Gastrocnemius medialis (tissue), 4 donors: ENCODE measurements at regions of chr1 and their contacts with region 1.

Region 1: DNA sequence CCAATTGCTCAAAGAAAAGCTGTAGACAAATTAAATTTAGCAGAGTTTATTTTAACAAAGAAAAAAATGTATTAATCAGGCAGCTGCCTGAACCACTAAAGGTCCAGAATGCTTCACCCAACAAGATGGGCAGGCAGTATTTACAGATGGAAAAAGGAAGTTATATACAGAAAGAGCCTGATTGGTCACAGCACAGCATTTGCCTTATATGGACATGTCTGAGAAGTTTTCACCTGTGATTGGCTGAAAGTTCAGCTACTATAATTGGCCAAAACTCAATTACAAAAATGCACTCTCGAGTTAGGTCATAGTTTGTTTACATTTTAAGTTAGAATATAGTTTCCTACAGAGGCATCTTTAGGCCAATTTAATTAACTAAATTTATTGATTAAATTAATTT is 15.1 kb upstream of the FMO1 start:
- DNase-seq: no peak
- ATAC-seq: no peak
- H3K4me3 ChIP-seq: no peak overlapping the region
- H3K27ac ChIP-seq: no peak overlapping the region
- H3K4me1 ChIP-seq: no peaks in the 10 kb centered on the region
- H3K27me3 ChIP-seq: no peaks in the 10 kb centered on the region
- CTCF ChIP-seq: no peak
- POLR2A ChIP-seq: no peak

Region 2: GRCh38 chr1:171081314-171081753 is 151.9 kb before region 1 on chr1:
- in situ Hi-C with region 1: loop called in 3 of 4 experiments (anchors 10 to 25 kb)
- intact Hi-C with region 1: no loop called
- DNase-seq: no peak
- ATAC-seq: peak in 1 of 2 donors; percentile 24
- H3K4me3 ChIP-seq: no peak overlapping the region
- H3K27ac ChIP-seq: peak overlapping the region; percentile 13 to 52 (median 49)
- H3K4me1 ChIP-seq: peaks cover 0 to 4% of the 10 kb centered on the region in 2 donors
- H3K27me3 ChIP-seq: no peaks in the 10 kb centered on the region
- CTCF ChIP-seq: peak in 3 of 5 experiments; percentile 22 to 43 (median 29)
- POLR2A ChIP-seq: no peak

Region 3: DNA sequence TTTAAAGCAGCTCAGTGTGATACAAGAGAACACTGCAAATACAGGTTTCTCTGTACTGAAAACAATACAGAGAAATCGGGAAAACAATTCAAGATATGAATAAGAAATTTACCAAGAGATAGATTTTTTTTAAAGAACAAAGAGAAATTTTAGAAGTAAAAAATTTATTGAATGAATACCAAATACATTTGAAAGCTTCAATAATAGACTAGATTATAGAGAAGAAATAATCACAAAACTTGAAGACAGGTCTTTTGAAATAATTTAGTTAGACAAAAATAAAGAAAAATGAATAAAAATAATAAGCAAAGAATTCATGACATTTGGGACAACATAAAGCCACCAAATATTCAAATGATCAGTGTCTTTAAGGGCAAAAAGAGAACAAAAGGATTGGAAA is 67.2 kb after region 1 on chr1:
- in situ Hi-C with region 1: no loop called
- intact Hi-C with region 1: loop called (anchors 5 kb)
- DNase-seq: no peak
- ATAC-seq: no peak
- H3K4me3 ChIP-seq: no peak overlapping the region
- H3K27ac ChIP-seq: no peak overlapping the region
- H3K4me1 ChIP-seq: no peaks in the 10 kb centered on the region
- H3K27me3 ChIP-seq: no peaks in the 10 kb centered on the region
- CTCF ChIP-seq: no peak
- POLR2A ChIP-seq: no peak